ENCODE measurements at regions of chr7 and their contacts with region 1.

Region 1: DNA sequence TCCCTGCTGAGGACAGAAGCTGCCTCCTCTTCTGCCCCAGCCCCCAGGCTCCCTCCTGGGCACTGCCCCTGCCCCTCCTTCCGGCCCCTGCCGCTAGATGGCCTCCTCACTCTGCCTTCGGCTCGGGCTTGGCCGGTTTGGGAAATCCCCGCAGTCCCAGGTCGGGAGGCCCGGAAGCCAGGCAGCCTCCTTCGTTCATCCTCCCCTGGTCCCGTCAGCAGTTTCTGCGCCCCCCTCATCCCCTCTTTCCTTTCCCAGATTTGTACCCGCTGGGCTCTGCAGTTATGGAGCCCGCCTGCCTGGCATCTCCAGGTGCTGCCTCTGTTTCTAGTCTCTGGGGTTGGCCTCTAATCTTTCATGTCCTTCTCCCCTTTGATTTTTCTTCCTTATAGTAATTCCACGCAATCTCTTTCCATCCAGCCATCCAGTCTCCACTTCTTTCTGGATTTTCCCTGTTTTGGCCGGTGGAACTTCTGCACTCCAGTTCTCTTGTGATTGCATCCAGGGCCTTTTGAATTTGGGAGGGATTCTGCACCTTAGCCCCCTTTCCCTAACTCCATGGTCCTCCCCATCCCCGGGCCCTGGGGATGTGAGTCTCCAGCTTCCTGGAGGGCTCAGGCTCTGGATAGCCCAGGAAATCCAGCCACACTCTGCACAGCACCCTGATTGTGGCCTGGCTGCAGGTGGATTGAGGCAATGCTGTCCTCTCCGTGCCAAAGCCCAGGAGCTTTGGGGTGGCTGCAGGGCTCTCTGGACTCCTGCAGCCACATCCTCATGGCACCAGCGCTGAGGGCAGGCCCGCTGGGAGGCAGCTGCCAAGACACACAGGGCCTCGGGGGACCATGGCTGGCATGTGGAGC is 3.3 kb upstream of the SHH start:
- DNase-seq: peak; percentile 43
- ATAC-seq: peak; percentile 86
- H3K4me3 ChIP-seq: no peak overlapping the region
- H3K27ac ChIP-seq: no peak overlapping the region
- H3K4me1 ChIP-seq: no peaks in the 10 kb centered on the region
- H3K27me3 ChIP-seq: peaks cover 43% of the 10 kb centered on the region
- CTCF ChIP-seq: peak; percentile 82
- POLR2A ChIP-seq: no peak
- RAD21 ChIP-seq: peak; percentile 89

Region 2: GRCh38 chr7:156473476-156474240 is 658.1 kb after region 1 on chr7:
- CTCF ChIA-PET with region 1: no interaction called
- POLR2A ChIA-PET with region 1: no interaction called
- dilution Hi-C with region 1: no loop called
- in situ Hi-C with region 1: loop called (anchors 10 kb)
- intact Hi-C with region 1: loop called (anchors 1 kb)
- DNase-seq: peak; percentile 19
- ATAC-seq: peak; percentile 25; the same call in 1 of the 2 replicates
- H3K4me3 ChIP-seq: no peak overlapping the region
- H3K27ac ChIP-seq: no peak overlapping the region
- H3K4me1 ChIP-seq: peaks cover 11% of the 10 kb centered on the region
- H3K27me3 ChIP-seq: no peaks in the 10 kb centered on the region
- CTCF ChIP-seq: peak; percentile 58
- POLR2A ChIP-seq: no peak
- RAD21 ChIP-seq: peak; percentile 42

Region 3: GRCh38 chr7:156640257-156640948 is 824.8 kb after region 1 on chr7 and contains the start of gene RNF32:
- CTCF ChIA-PET with region 1: no interaction called
- POLR2A ChIA-PET with region 1: no interaction called
- dilution Hi-C with region 1: no loop called
- in situ Hi-C with region 1: loop called (anchors 25 kb)
- intact Hi-C with region 1: no loop called
- DNase-seq: peak; percentile 86
- ATAC-seq: peak; percentile 96
- H3K4me3 ChIP-seq: peak within 1 kb of the TSS; percentile 85
- H3K27ac ChIP-seq: peak within 1 kb of the TSS; percentile 72
- H3K4me1 ChIP-seq: peaks cover 2% of the 10 kb centered on the region; the same call in 1 of the 2 replicates
- H3K27me3 ChIP-seq: no peaks in the 10 kb centered on the region
- CTCF ChIP-seq: no peak
- POLR2A ChIP-seq: peak; percentile 63; the same call in 1 of the 2 replicates
- RAD21 ChIP-seq: no peak
- total RNA-seq, gene RNF32: 0.36 and 0.56 TPM in 2 replicates

Region 4: DNA sequence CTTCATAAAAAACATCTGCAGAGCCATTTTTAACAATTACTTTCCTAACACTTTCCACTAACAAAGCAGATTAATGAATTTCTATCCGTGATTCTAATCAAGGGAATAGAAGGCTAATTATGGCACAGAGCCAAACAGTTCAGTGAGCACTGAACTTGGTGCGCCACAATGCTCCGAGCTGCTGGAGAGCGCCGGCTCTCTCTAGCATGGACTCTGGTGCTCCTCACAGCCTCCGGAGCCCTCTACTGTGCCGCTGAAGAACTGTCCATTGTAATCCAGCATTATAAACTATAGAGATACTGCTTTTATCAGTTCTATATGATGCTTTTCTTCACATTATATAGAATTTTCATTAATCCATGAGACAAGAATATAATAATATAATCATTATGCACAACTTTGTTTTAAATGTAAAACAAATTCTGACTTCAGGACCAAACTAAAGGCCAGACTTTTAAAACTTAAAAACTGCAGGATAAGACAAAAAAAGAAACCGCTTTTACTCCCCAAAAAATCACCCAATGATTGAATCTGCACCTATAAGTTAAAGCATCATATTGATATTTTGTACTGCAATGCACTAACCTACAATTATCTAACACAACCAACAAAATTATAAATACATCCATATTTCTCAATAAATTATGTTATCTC is 948.6 kb after region 1 on chr7:
- CTCF ChIA-PET with region 1: no interaction called
- POLR2A ChIA-PET with region 1: no interaction called
- dilution Hi-C with region 1: no loop called
- in situ Hi-C with region 1: no loop called
- intact Hi-C with region 1: loop called (anchors 1 kb)
- DNase-seq: peak; percentile 78
- ATAC-seq: peak; percentile 100
- H3K4me3 ChIP-seq: no peak overlapping the region
- H3K27ac ChIP-seq: no peak overlapping the region
- H3K4me1 ChIP-seq: no peaks in the 10 kb centered on the region
- H3K27me3 ChIP-seq: no peaks in the 10 kb centered on the region
- CTCF ChIP-seq: peak; percentile 89
- POLR2A ChIP-seq: 0 out of 2 replicates have a peak, but pooled peaks have one; percentile 38
- RAD21 ChIP-seq: peak; percentile 96

Region 5: DNA sequence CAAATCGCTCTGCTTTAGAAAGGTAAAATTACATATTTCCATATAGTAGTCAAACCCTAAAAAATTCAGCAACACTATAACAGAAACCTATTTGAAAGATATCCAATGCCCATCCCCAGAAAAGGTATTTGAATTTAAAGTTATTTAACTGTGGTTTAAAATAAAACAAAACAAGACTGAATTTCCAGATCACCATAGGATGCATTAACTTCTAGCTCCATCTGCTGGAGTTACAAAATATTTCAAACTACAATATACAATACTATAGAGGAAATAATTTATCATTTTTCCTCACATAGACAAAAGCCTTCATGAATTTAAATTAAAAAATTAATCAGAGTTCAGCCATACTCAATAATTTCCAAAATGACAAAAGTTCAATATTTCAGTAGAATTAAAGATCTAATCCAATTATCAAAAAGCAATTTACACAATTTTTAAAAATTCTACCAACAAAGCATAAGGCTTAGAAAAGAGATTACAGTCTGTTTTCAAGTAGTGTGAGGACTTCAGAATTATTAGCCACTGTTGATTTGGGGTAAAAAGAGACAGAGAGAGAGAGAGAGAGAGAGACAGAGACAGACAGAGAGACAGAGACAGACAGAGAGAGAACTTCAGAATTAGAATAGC is 1001.5 kb after region 1 on chr7:
- CTCF ChIA-PET with region 1: interaction called, 3 read pairs
- POLR2A ChIA-PET with region 1: no interaction called
- dilution Hi-C with region 1: no loop called
- in situ Hi-C with region 1: no loop called
- intact Hi-C with region 1: loop called (anchors 1 kb)
- DNase-seq: peak; percentile 38
- ATAC-seq: peak; percentile 72
- H3K4me3 ChIP-seq: no peak overlapping the region
- H3K27ac ChIP-seq: no peak overlapping the region
- H3K4me1 ChIP-seq: no peaks in the 10 kb centered on the region
- H3K27me3 ChIP-seq: no peaks in the 10 kb centered on the region
- CTCF ChIP-seq: peak; percentile 67
- POLR2A ChIP-seq: no peak
- RAD21 ChIP-seq: peak; percentile 79

Measured in IMR-90 (cell line).